CD14-positive monocyte (primary cell): ENCODE measurements at regions of chr15 and their contacts with region 1.

Region 1: GRCh38 chr15:64905119-64905831 is 6.4 kb upstream of the ANKDD1A start:
- DNase-seq: peak; percentile 76 to 77 (median 77)
- H3K4me3 ChIP-seq: peak overlapping the region; percentile 5 to 65 (median 20)
- H3K4me3 Mint-ChIP-seq: peak overlapping the region; percentile 75 to 84
- H3K27ac ChIP-seq: peak overlapping the region in 1 of 2 donors; percentile 13
- H3K27ac Mint-ChIP-seq: peak overlapping the region; percentile 17 to 91 (median 73)
- H3K4me1 ChIP-seq: peaks cover 17 to 26% of the 10 kb centered on the region in 2 donors
- H3K4me1 Mint-ChIP-seq: peaks cover 31% of the 10 kb centered on the region
- H3K27me3 ChIP-seq: peaks cover 0 to 8% of the 10 kb centered on the region in 2 donors
- H3K27me3 Mint-ChIP-seq: peaks cover 7 to 16% (median 15%) of the 10 kb centered on the region in 3 donors
- CTCF ChIP-seq: peak; percentile 90

Region 2: DNA sequence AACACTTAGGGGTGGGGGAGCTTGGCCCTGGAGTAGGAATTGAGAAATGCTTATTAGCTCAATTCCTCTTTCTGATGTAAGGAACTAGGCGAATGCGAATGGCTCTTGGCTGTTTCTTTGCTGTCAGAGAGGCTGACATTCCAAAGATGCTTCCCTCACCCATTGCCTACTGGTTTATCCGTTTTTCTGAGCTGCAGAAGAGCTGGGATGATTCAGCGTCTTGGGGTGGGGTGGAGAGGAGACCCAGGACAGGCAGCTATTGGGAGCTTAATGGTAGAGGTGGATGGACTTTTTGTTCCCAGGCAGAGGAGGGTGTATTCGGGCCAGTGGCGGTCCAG is 53.8 kb before region 1 on chr15:
- intact Hi-C with region 1: loop called (anchors 2 to 5 kb)
- DNase-seq: peak; percentile 74 to 89 (median 85)
- H3K4me3 ChIP-seq: peak overlapping the region in 1 of 3 experiments; percentile 57
- H3K4me3 Mint-ChIP-seq: peak overlapping the region; percentile 64 to 86
- H3K27ac ChIP-seq: peak overlapping the region; percentile 61 to 69
- H3K27ac Mint-ChIP-seq: peak overlapping the region; percentile 86 to 98 (median 94)
- H3K4me1 ChIP-seq: peaks cover 89 to 99% of the 10 kb centered on the region in 2 donors
- H3K4me1 Mint-ChIP-seq: peaks cover 94% of the 10 kb centered on the region
- H3K27me3 ChIP-seq: no peaks in the 10 kb centered on the region
- H3K27me3 Mint-ChIP-seq: no peaks in the 10 kb centered on the region
- CTCF ChIP-seq: no peak

Region 3: DNA sequence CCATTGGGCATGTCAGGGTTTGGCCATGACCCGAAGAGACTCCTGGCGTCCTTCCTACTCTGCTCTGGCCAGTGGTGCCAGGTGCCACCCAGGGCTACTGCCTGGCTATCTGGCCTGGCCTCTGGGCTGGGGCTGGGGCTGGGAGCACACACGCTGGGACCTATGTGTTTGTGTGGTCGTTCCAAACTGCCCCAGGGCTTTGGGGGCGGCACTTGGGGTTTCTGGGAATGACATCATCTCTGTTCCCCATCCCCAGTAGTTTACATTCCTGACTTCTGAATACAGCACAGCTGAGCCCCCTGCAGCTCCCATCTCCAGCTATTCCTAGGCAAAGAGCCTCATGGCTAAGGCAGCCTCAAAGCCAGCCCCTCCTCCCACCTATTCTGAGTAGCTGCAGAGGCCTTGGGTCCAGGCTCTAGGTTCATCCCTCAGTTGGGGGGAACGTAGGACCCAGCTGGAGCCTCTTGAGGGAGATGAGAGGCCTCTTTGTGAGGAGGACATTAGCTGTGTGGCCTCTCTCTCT is 39.2 kb before region 1 on chr15:
- intact Hi-C with region 1: loop called in 1 of 2 experiments (anchors 5 kb)
- DNase-seq: no peak
- H3K4me3 ChIP-seq: no peak overlapping the region
- H3K4me3 Mint-ChIP-seq: no peak overlapping the region
- H3K27ac ChIP-seq: peak overlapping the region; percentile 23 to 62
- H3K27ac Mint-ChIP-seq: peak overlapping the region in 5 of 7 donors; percentile 67 to 78 (median 70)
- H3K4me1 ChIP-seq: peaks cover 31 to 56% of the 10 kb centered on the region in 2 donors
- H3K4me1 Mint-ChIP-seq: peaks cover 56% of the 10 kb centered on the region
- H3K27me3 ChIP-seq: no peaks in the 10 kb centered on the region
- H3K27me3 Mint-ChIP-seq: peaks cover 0 to under 1% (median 0%) of the 10 kb centered on the region in 3 donors
- CTCF ChIP-seq: no peak

Region 4: DNA sequence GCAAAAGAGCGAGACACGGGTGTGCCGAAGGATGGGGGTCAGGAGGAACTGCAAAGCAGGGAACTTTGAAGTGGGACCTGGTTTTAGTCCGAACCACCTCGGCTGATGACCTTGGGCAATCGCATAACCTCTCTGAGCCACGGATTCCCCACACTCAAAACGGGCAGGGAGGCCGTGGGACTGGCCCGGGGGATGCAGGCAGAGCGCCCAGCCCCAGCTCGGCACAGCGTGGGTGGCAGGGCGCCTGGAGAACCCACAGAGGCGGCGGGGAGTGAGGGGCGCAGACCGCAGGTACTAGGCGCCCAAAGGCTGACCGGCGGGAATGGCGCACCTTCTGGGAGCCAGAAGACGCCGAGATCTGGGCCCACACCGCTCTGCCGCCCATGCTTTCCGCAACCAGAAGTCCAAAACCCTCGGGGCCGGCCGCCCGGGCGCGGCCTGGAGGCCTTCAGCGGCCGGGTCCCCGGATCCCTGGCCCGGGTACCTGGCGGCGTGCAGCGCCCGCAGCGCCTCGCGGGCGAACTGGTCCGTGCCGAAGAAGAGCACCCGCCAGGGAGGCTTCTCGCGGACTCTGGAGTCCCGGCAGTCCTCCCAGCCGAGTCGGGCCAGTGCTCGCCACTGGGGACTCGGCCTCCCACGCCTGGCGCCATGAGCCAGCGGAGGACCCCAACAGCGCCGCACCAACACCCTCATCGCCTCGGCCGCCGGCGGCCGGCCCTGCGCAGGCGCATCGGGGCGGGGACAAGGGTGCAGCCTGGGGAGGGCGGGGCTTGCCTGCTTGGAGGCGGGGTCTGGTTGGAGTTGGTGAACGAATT is 123.9 kb after region 1 on chr15 and contains the start of gene MTFMT:
- intact Hi-C with region 1: no loop called
- DNase-seq: peak; percentile 69 to 78 (median 72)
- H3K4me3 ChIP-seq: peak within 1 kb of the TSS; percentile 75 to 90 (median 87)
- H3K4me3 Mint-ChIP-seq: peak within 1 kb of the TSS; percentile 84 to 91
- H3K27ac ChIP-seq: peak within 1 kb of the TSS in 1 of 2 donors; percentile 62
- H3K27ac Mint-ChIP-seq: peak within 1 kb of the TSS in 3 of 7 donors; percentile 24 to 41 (median 33)
- H3K4me1 ChIP-seq: peaks cover 24 to 29% of the 10 kb centered on the region in 2 donors
- H3K4me1 Mint-ChIP-seq: peaks cover 26% of the 10 kb centered on the region
- H3K27me3 ChIP-seq: peaks cover 0 to 9% of the 10 kb centered on the region in 2 donors
- H3K27me3 Mint-ChIP-seq: peaks cover 6 to 13% (median 10%) of the 10 kb centered on the region in 3 donors
- CTCF ChIP-seq: no peak
- polyA plus RNA-seq, gene MTFMT: 5.1 to 10.8 (median 9.0) TPM